ENCODE measurements at regions of chr2 and their contacts with region 1.

Region 1: GRCh38 chr2:7725171-7725849 is 808.1 kb downstream of the RNF144A start:
- DNase-seq: peak; percentile 20 to 82
- ATAC-seq: peak; percentile 89 to 94 (median 90)
- H3K4me3 ChIP-seq: peak overlapping the region; percentile 37
- H3K4me3 Mint-ChIP-seq: peak overlapping the region; percentile 79
- H3K27ac ChIP-seq: peak overlapping the region; percentile 41
- H3K27ac Mint-ChIP-seq: peak overlapping the region; percentile 79 to 81
- H3K4me1 ChIP-seq: peaks cover 50% of the 10 kb centered on the region
- H3K4me1 Mint-ChIP-seq: peaks cover 57 to 63% of the 10 kb centered on the region in 2 donors
- H3K27me3 ChIP-seq: no peaks in the 10 kb centered on the region
- H3K27me3 Mint-ChIP-seq: no peaks in the 10 kb centered on the region
- CTCF ChIP-seq: no peak

Region 2: DNA sequence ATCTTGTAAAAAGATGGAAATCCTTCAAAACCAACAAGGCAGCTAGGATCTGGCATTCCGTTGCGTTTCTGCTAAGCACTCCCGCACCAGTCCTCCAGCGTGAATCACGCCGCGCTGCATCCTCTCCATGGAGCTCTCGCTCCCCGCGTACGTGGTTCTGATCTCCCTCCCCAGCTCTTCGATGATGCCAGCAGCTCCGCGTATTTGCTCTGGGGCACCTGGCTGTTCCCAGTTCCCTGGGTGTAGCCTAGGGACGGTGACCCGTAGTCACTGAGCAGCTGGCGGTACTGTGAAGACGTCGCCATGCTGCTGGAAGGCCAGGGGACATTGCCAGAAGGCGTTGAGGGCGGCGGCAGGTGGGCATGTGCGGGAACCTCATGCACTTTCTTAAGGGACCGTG is 400.6 kb before region 1 on chr2:
- intact Hi-C with region 1: no loop called
- DNase-seq: no peak
- ATAC-seq: no peak
- H3K4me3 ChIP-seq: no peak overlapping the region
- H3K4me3 Mint-ChIP-seq: no peak overlapping the region
- H3K27ac ChIP-seq: no peak overlapping the region
- H3K27ac Mint-ChIP-seq: no peak overlapping the region
- H3K4me1 ChIP-seq: no peaks in the 10 kb centered on the region
- H3K4me1 Mint-ChIP-seq: peaks cover 0 to 6% of the 10 kb centered on the region in 2 donors
- H3K27me3 ChIP-seq: peaks cover 3% of the 10 kb centered on the region
- H3K27me3 Mint-ChIP-seq: peaks cover 15 to 55% of the 10 kb centered on the region in 2 donors
- CTCF ChIP-seq: no peak

Region 3: DNA sequence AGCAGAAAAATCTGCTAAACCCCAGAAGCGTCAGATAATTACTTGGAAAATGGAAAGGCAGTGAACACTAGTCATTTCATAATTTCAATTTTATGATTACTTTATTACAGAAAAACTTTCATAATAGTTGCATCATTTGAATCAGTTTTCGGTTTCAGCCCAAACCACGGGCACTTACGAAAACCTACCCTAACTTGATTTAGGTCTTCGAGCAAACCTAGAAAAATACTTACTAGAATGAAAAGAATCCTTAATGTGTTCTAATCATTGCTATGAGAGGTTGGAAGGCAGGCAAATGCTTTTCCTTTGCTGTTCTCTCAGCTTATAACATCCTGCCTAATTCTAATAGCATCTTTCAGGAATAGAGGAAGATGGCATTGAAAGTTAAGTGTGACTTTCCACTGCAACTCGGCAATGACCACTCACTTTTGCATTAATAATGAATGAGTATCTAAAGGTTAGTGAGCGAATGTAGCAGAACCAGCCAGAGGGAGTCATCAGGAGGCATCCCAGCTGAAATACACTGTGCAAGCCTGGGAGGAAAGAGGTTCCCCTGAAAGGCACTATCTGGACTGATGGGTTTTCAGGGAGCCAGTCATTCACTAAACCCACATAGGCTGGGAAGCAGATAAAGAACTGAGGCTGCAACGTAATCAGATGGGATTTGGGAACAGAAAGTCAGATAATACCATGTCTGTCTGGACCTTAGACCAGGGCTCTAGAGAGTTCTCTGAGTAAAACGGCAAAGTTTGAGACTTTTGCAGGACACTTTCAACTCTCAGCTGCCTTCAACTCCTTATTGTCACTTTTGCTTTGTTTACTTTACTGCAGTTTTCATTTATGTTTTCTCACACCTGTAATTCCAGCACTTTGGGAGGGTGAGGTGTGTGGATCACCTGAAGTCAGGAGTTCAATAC is 287.3 kb before region 1 on chr2:
- intact Hi-C with region 1: loop called (anchors 5 kb)
- DNase-seq: peak in 1 of 2 donors; percentile 24
- ATAC-seq: no peak
- H3K4me3 ChIP-seq: no peak overlapping the region
- H3K4me3 Mint-ChIP-seq: peak overlapping the region; percentile 65
- H3K27ac ChIP-seq: peak overlapping the region; percentile 65
- H3K27ac Mint-ChIP-seq: peak overlapping the region; percentile 85 to 96
- H3K4me1 ChIP-seq: peaks cover 38% of the 10 kb centered on the region
- H3K4me1 Mint-ChIP-seq: peaks cover 64 to 71% of the 10 kb centered on the region in 2 donors
- H3K27me3 ChIP-seq: no peaks in the 10 kb centered on the region
- H3K27me3 Mint-ChIP-seq: no peaks in the 10 kb centered on the region
- CTCF ChIP-seq: no peak

Region 4: GRCh38 chr2:7748717-7749415 is 23.6 kb after region 1 on chr2:
- intact Hi-C with region 1: loop called (anchors 1 kb)
- DNase-seq: peak in 1 of 2 donors; percentile 69
- ATAC-seq: peak; percentile 50 to 61 (median 53)
- H3K4me3 ChIP-seq: no peak overlapping the region
- H3K4me3 Mint-ChIP-seq: peak overlapping the region; percentile 67
- H3K27ac ChIP-seq: peak overlapping the region; percentile 85
- H3K27ac Mint-ChIP-seq: peak overlapping the region; percentile 44 to 79
- H3K4me1 ChIP-seq: peaks cover 38% of the 10 kb centered on the region
- H3K4me1 Mint-ChIP-seq: peaks cover 37 to 42% of the 10 kb centered on the region in 2 donors
- H3K27me3 ChIP-seq: no peaks in the 10 kb centered on the region
- H3K27me3 Mint-ChIP-seq: no peaks in the 10 kb centered on the region
- CTCF ChIP-seq: no peak

Region 5: DNA sequence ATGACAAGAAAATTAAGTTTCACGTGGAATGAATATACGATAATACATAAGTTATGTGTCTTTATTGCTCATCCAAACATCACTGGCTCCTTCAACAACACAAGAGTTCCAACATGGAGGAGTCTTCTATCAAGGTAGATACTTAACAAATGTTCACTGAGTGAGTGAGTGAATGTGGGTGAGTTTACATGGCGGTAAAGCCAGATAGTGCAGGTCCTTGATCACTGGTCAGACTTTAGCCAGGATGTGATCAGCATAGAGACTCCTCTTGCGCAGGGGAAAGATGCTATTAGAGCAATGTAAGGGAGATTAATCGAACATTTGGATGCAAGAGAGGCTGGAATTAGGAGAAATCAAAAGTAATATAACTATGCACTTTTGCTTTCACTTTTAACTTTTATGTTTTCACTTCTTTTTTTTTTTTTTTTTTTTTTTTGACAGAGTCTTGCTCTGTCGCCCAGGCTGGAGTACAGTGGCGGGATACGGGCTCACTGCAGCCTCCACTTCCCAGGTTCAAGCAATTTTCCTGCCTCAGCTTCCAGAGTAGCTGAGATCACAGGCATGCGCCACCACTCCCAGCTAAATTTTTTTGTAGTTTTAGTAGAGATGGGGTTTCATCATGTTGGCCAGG is 707.5 kb after region 1 on chr2:
- intact Hi-C with region 1: no loop called
- DNase-seq: peak in 1 of 2 donors; percentile 16
- ATAC-seq: peak; percentile 70 to 77 (median 75)
- H3K4me3 ChIP-seq: no peak overlapping the region
- H3K4me3 Mint-ChIP-seq: peak overlapping the region; percentile 79
- H3K27ac ChIP-seq: peak overlapping the region; percentile 48
- H3K27ac Mint-ChIP-seq: peak overlapping the region; percentile 78 to 92
- H3K4me1 ChIP-seq: peaks cover 19% of the 10 kb centered on the region
- H3K4me1 Mint-ChIP-seq: peaks cover 70 to 78% of the 10 kb centered on the region in 2 donors
- H3K27me3 ChIP-seq: no peaks in the 10 kb centered on the region
- H3K27me3 Mint-ChIP-seq: no peaks in the 10 kb centered on the region
- CTCF ChIP-seq: no peak